Heart left ventricle (tissue), 16 donors: ENCODE measurements at regions of chr17 and their contacts with region 1.

Region 1: GRCh38 chr17:82273327-82274133 is at the start of gene CSNK1D:
- DNase-seq: peak; percentile 91 to 97 (median 93)
- ATAC-seq: peak; percentile 72 to 94 (median 93)
- H3K4me3 ChIP-seq: peak within 1 kb of the TSS; percentile 76 to 100 (median 94)
- H3K27ac ChIP-seq: peak within 1 kb of the TSS; percentile 96 to 100 (median 98)
- H3K4me1 ChIP-seq: peaks cover 4 to 53% (median 46%) of the 10 kb centered on the region in 12 donors
- H3K27me3 ChIP-seq: no peaks in the 10 kb centered on the region
- CTCF ChIP-seq: peak in 2 of 12 donors; percentile 5 to 9
- POLR2A ChIP-seq: peak in 1 of 2 donors; percentile 66
- total RNA-seq, gene CSNK1D: 38.4 to 83.9 (median 66.1) TPM

Region 2: GRCh38 chr17:82212331-82213250 is 60.9 kb before region 1 on chr17 and contains the start of gene CCDC57:
- intact Hi-C with region 1: loop called in 1 of 10 experiments (anchors 5 kb)
- DNase-seq: peak; percentile 83 to 92 (median 86)
- ATAC-seq: peak; percentile 39 to 86 (median 70)
- H3K4me3 ChIP-seq: peak within 1 kb of the TSS; percentile 84 to 99 (median 92)
- H3K27ac ChIP-seq: peak within 1 kb of the TSS; percentile 51 to 90 (median 84)
- H3K4me1 ChIP-seq: peaks cover 0 to 46% (median 27%) of the 10 kb centered on the region in 12 donors
- H3K27me3 ChIP-seq: no peaks in the 10 kb centered on the region
- CTCF ChIP-seq: peak in 3 of 12 donors; percentile 3 to 8 (median 5)
- POLR2A ChIP-seq: peak in 1 of 2 donors; percentile 66
- total RNA-seq, gene CCDC57: 4.3 to 17.6 (median 10.7) TPM

Region 3: DNA sequence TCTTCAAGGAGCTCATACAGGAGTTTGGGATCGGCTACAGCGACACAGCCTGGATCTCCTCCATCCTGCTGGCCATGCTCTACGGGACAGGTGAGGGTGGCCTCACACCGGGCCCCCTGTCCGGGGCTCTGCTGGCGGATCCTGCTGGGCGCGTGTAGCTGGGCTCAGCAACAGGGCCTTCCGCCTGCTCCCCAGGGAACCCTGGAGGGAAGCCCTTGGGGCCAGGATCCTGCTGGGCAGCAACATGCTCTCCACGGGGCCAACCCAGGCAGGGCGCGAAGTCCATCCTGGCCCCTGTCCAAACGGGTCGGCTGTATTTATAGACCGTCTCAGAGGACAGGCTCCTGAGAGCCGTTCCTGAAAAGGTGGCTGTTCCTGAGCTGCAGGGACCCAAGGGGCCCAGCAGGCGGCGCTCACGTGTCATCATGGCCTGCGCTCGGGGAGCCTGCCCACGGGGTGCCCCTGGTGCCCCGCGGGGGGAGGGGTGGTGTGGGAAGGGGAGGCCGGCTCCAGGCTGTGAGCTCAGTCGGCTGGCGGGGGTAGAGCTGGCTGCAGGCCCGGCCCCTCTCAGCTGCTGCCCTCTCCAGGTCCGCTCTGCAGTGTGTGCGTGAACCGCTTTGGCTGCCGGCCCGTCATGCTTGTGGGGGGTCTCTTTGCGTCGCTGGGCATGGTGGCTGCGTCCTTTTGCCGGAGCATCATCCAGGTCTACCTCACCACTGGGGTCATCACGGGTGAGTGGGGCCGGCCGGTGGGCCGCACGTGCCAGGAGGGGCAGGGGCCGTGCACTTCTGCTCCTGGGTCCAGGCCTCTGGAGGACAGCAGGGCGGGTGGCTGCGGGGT is 37.2 kb before region 1 on chr17:
- intact Hi-C with region 1: loop called in 2 of 10 experiments (anchors 5 kb)
- DNase-seq: peak in 4 of 5 donors; percentile 64 to 81 (median 72)
- ATAC-seq: peak in 3 of 4 donors; percentile 3 to 8 (median 6)
- H3K4me3 ChIP-seq: no peak overlapping the region
- H3K27ac ChIP-seq: peak overlapping the region in 2 of 12 donors; percentile 27 to 86
- H3K4me1 ChIP-seq: peaks cover 37 to 91% (median 63%) of the 10 kb centered on the region in 12 donors
- H3K27me3 ChIP-seq: no peaks in the 10 kb centered on the region
- CTCF ChIP-seq: peak; percentile 82 to 90 (median 86)
- POLR2A ChIP-seq: no peak

Region 4: GRCh38 chr17:82292251-82293154 is 19.0 kb after region 1 on chr17:
- intact Hi-C with region 1: loop called in 1 of 10 experiments (anchors 1 kb)
- DNase-seq: peak; percentile 97 to 99 (median 97)
- ATAC-seq: peak; percentile 94 to 97 (median 95)
- H3K4me3 ChIP-seq: peak overlapping the region; percentile 68 to 98 (median 76)
- H3K27ac ChIP-seq: peak overlapping the region; percentile 91 to 99 (median 95)
- H3K4me1 ChIP-seq: peaks cover 7 to 55% (median 34%) of the 10 kb centered on the region in 12 donors
- H3K27me3 ChIP-seq: no peaks in the 10 kb centered on the region
- CTCF ChIP-seq: no peak
- POLR2A ChIP-seq: peak; percentile 90 to 97